HepG2 (cell line): ENCODE measurements at regions of chr6 and their contacts with region 1.

Region 1: DNA sequence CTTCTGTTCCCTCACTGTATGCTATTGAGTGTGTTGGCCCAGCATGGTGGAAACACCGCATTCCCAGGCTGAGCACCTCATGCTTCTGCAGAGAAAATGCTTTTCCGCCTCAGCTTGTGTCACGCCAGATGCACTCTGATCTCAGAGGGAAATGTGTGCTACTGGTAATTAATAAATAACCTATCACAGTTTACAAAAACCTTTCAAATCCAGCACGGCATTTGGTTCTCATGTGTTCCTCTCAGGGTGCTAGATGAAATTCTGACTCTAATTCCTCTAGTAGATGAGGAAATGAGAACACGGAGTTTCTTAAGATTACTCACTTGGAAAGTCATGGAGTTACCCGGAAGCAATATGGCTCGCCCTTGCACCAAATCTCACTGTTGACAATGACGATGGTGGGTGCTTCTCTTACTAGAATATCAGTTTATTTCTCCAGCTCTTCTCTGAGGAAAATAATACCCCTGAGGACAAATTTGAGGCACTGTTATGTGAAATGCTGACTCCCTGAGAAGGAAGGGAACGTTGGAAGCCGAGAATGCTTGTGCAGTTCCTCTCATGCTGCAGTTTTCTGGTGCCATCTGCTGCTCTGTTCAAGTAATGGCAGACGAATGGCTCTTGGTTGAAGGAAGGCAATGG is 116.6 kb downstream of the RNF144B start:
- DNase-seq: peak; percentile 80
- ATAC-seq: peak; percentile 91
- H3K4me3 ChIP-seq: peak overlapping the region; percentile 46 to 63 (median 61)
- H3K27ac ChIP-seq: no peak overlapping the region
- H3K4me1 ChIP-seq: peaks cover 15% of the 10 kb centered on the region
- H3K27me3 ChIP-seq: peaks cover 0 to 5% of the 10 kb centered on the region in 2 experiments; a peak in 1 of 5 replicates
- CTCF ChIP-seq: peak; percentile 97
- EP300 ChIP-seq: no peak
- POLR2A ChIP-seq: no peak
- RAD21 ChIP-seq: peak; percentile 98

Region 2: DNA sequence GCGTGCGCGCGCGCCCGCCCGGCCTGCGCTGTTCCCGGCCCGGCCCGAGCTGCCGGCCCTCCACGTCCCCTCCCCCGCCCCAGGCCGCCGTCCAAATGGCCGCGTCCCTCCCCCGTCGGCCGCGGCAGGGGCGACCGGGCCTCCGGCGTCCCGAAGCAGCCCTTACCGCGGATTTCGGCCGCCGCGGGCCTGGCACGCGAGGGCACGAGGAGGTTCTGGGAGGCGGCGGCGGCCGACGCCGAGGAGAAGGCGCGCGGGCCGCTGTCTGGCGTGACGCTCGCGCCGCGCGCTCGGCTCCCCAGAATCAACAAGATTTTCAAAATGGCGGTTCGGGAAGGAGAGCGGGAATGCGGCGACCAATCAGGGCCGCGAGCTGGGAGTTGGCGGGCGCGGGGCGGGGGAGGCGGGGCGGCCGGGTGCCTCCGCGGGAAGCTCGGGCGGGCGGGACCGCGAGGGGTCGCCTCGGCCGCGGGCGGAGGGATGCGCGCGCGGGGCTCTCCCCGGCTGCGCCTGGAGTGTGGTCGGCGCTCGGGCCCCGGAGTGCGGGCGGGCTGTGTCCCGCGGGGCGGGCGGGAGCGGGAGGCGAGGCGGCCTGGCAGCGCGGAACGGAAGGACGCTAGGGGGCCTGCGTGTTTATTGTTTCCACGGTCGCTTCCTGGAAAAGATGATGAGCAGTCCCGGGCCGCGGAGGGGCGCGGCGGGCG is 239.3 kb before region 1 on chr6 and contains the start of gene DEK:
- CTCF ChIA-PET with region 1: no interaction called
- POLR2A ChIA-PET with region 1: interaction called, 3 read pairs
- in situ Hi-C with region 1: no loop called
- intact Hi-C with region 1: loop called (anchors 2 kb)
- DNase-seq: peak; percentile 84
- ATAC-seq: peak; percentile 88
- H3K4me3 ChIP-seq: peak within 1 kb of the TSS; percentile 80 to 95 (median 90)
- H3K27ac ChIP-seq: peak within 1 kb of the TSS; percentile 92
- H3K4me1 ChIP-seq: peaks cover 84% of the 10 kb centered on the region
- H3K27me3 ChIP-seq: no peaks in the 10 kb centered on the region; a peak in 1 of 5 replicates
- CTCF ChIP-seq: peak; percentile 75
- EP300 ChIP-seq: no peak
- POLR2A ChIP-seq: peak; percentile 45 to 72
- RAD21 ChIP-seq: peak; percentile 27; the same call in 1 of the 2 replicates
- total RNA-seq, gene DEK: 276 and 337 TPM in 2 replicates

Region 3: DNA sequence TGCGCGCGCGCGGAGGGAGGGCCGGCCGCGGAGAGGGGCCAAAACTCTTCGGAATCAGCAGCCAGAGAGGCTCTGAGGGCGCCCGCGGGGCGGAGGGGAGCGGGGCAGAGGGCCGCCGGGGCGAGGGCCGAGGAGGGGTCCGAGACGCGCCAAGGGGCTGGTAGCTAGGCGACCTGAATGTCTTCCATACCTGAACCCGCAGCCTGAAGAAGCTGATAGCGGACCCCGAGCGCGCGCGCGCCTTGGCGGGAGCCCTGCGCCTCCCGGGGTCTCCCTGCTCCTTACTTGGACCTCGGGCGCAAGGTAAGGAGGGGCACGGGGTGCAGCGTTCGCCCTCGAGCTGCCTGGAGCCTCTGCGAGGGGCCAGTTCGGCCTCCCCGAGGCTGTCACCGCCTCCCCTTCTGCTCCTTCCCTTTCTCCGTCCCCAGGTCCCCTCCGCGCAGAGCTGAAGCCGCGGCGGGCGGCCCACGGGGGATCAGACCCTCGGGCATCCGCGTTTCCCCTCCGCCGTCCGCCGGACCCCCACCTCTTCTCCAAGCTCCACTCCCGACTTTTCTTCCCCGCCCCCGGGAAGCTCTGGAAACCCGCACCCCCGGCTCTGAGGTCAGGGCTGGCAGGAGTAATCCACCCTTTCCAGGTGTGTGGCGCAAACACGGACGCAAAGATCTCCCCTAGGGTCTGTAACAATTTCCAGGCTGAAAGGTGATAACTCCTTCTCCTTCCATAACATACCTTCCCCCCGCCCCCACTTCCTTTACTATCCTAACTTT is 226.3 kb before region 1 on chr6:
- CTCF ChIA-PET with region 1: no interaction called
- POLR2A ChIA-PET with region 1: no interaction called
- in situ Hi-C with region 1: no loop called
- intact Hi-C with region 1: no loop called
- DNase-seq: no peak
- ATAC-seq: peak; percentile 64
- H3K4me3 ChIP-seq: peak overlapping the region; percentile 45 to 66 (median 47)
- H3K27ac ChIP-seq: no peak overlapping the region
- H3K4me1 ChIP-seq: 0 out of 2 replicates have a peak, but pooled peaks cover 13% of the 10 kb centered on the region
- H3K27me3 ChIP-seq: peaks cover 5 to 40% of the 10 kb centered on the region in 2 experiments; a peak in 4 of 5 replicates
- CTCF ChIP-seq: no peak
- EP300 ChIP-seq: no peak
- POLR2A ChIP-seq: no peak
- RAD21 ChIP-seq: no peak

Region 4: DNA sequence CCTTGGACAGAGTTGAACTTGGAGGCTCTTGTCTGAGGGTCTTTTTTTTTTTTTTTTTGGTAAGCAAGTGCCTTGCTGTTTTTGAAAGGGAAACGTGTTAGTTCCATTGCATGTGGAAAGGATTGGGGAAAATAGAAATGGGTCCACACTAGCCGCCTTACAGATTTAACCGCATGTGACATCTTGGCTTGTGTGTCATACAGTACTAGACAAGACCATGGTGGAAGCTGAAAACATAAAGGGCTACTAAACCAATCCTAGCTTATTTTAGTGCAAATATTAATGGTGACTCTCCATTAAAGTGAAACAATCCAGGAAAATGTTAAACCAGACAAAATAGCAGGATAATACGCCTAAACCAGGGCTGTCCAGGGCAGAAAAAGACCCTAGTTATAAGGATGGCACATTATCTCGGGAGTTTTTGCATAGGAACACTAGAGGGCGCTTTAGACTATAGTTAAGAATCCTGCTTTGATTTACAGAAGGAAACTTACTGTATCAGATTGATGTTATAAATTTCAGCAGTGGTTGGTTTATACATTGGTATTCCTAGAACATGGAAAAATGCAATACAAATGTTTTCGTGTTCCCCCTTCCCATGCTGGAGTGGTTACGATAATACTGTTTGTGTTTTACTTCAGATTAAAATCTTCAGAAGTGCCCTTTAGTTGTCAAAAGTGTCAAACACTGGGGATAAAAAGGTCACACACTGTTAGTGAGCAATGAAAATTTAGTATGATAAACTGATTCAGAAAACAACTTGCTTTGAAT is 179.6 kb before region 1 on chr6:
- CTCF ChIA-PET with region 1: interaction called, 140 read pairs
- POLR2A ChIA-PET with region 1: no interaction called
- in situ Hi-C with region 1: loop called (anchors 5 kb)
- intact Hi-C with region 1: loop called (anchors 1 kb)
- DNase-seq: peak; percentile 54
- ATAC-seq: peak; percentile 90
- H3K4me3 ChIP-seq: no peak overlapping the region
- H3K27ac ChIP-seq: no peak overlapping the region
- H3K4me1 ChIP-seq: no peaks in the 10 kb centered on the region
- H3K27me3 ChIP-seq: no peaks in the 10 kb centered on the region
- CTCF ChIP-seq: peak; percentile 83
- EP300 ChIP-seq: no peak
- POLR2A ChIP-seq: no peak
- RAD21 ChIP-seq: peak; percentile 82

Region 5: DNA sequence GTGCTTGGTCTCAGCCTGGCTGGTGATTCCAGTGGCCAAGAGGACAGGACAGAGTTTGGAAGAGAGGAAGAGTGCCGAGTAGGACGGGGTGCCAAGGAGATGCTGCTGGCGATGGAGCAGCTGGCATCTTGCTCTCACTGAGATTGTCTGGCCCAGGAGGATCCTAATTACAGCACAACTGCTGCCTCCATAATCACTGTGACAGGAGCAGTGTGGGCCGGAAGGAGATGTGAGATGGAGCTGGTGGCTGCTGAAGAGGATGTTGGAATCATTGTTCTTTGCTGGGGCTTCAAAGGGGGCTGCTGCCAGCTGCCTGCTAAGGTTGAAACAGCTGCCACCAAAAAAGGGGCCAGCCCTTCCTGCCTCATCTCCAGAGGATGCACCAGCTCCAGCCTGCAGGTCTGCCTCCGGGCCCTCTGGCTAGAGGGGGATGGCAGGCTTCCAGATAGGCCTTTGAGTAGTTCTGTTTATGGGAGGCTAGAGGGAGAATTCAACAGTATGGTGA is 97.9 kb after region 1 on chr6:
- CTCF ChIA-PET with region 1: no interaction called
- POLR2A ChIA-PET with region 1: no interaction called
- in situ Hi-C with region 1: no loop called
- intact Hi-C with region 1: no loop called
- DNase-seq: no peak
- ATAC-seq: no peak
- H3K4me3 ChIP-seq: no peak overlapping the region
- H3K27ac ChIP-seq: no peak overlapping the region
- H3K4me1 ChIP-seq: no peaks in the 10 kb centered on the region
- H3K27me3 ChIP-seq: no peaks in the 10 kb centered on the region
- CTCF ChIP-seq: no peak
- EP300 ChIP-seq: no peak
- POLR2A ChIP-seq: no peak
- RAD21 ChIP-seq: no peak